ENCODE measurements at regions of chr21 and their contacts with region 1.

Region 1: DNA sequence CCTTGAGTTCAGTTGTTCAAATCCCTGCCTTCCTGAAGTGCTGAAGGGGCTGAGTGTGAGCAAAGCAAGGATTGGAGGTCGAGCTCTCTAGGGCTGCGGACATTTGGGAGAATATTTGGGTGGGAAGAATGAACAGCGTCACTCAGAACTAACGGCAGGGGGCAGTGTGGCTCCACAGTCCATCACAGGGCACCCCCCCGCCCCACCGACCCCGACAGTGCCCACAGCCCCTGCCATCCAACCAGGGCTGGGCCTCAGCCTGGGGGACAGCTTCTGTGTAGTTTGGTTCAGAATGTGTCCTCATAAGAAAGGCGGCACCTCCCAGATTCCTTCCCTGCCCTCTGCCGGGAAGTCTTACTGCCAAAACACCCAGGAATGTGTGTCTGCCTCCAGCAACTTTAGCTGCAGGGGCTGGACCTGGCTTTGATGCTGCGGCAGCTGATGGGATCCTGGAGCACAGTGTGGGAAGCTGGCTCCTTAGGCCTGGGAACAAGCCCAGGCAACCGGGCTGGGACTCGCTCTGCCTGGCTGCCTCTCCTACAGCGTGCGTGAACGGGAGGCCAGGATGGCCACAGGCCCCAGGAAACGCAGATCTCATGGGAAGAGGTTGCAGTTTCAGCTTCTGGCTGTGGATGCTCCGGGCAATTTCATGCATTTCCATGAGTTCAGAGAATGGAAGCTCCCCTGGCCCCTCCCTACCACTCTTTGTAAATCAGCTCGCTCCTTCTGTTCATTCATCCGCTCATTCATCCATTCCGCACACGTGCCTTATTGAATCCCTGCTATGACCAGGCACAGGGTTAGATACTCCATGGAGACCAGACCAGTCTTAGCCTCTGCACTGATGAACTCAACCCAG is 104.9 kb upstream of the TMPRSS2 start:
- H3K4me3 ChIP-seq: no peak overlapping the region
- H3K27ac ChIP-seq: no peak overlapping the region
- H3K4me1 ChIP-seq: no peaks in the 10 kb centered on the region
- CTCF ChIP-seq: peak; percentile 72

Region 2: DNA sequence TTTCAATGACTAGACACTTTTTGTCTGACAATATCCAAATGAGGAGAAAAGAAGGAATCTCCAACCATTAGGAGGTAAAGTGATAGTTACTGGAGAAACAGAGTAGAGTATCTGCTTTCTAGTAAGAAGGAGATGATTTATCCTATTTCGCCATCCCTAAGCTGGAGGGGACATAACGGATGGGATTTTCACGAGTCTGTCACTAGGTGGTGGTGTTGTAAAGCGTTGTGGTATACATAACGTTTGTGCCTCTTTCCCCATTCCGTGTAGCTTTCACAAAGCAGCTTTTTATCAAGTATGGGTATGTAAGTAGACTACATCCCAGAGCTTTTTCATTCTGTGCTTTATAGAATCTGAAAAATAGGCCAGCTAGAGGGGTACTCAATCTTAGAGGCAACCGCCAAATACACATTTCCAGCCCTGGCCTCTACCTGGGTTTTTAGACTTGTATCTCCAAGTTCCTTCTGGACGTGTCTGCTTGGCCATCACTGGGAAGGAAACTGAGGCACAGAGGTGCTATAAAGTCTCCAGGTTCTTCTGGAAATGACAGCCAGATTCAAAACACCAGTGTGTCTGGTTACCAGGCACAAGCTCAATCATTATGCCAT is 329.6 kb before region 1 on chr21:
- CTCF ChIA-PET with region 1: interaction called, 92 read pairs
- POLR2A ChIA-PET with region 1: no interaction called
- H3K4me3 ChIP-seq: no peak overlapping the region
- H3K27ac ChIP-seq: no peak overlapping the region
- H3K4me1 ChIP-seq: no peaks in the 10 kb centered on the region
- CTCF ChIP-seq: peak; percentile 58

Region 3: DNA sequence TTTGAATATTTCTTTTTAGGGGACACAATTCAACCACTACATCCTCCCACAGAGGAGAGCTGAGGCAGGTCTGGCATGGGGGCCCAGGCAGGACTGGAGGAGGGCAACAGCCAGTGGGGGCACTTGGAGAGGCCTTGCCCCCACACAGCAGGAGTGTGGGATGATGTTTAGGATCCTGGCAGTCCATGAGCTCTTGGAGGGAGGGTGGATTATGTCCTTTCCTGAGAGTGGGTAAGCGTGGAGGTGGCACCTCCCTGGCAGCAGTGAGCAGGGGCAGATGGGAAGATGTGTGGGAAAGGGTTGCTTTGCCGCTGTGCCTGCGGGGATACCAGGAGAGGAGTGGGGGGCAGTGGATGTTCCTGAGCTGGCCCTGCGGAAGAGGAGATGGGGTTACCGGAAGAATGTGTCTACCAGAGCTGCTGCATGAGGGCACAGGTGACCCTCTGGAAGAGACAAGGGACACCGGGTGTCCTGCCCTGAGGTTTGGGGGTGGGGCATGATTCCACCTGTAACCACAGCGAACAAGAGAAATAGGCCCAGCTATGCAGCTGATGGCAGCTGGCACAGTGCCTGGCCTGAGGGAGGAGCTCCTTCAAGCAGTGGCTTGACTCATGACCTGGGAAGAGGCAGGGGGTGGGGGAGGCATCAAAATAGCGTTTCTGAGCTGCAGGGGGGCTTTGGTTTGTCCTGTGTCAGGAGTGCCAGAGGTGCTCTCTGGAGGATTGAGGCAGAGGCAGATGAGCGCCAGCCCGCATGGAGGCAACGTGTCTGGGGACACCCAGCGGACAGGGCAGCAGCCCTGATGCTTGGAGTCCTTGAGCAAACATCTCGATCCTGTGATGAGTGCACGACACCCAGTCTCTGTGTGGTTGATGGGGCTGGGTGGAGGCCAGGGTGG is 18.9 kb after region 1 on chr21:
- CTCF ChIA-PET with region 1: interaction called, 23 read pairs
- POLR2A ChIA-PET with region 1: no interaction called
- H3K4me3 ChIP-seq: no peak overlapping the region
- H3K27ac ChIP-seq: no peak overlapping the region
- H3K4me1 ChIP-seq: peaks cover 7% of the 10 kb centered on the region
- CTCF ChIP-seq: no peak

Region 4: GRCh38 chr21:41691205-41692194 is 78.6 kb after region 1 on chr21:
- CTCF ChIA-PET with region 1: no interaction called
- POLR2A ChIA-PET with region 1: no interaction called
- H3K4me3 ChIP-seq: no peak overlapping the region
- H3K27ac ChIP-seq: no peak overlapping the region
- H3K4me1 ChIP-seq: no peaks in the 10 kb centered on the region
- CTCF ChIP-seq: no peak

Region 5: DNA sequence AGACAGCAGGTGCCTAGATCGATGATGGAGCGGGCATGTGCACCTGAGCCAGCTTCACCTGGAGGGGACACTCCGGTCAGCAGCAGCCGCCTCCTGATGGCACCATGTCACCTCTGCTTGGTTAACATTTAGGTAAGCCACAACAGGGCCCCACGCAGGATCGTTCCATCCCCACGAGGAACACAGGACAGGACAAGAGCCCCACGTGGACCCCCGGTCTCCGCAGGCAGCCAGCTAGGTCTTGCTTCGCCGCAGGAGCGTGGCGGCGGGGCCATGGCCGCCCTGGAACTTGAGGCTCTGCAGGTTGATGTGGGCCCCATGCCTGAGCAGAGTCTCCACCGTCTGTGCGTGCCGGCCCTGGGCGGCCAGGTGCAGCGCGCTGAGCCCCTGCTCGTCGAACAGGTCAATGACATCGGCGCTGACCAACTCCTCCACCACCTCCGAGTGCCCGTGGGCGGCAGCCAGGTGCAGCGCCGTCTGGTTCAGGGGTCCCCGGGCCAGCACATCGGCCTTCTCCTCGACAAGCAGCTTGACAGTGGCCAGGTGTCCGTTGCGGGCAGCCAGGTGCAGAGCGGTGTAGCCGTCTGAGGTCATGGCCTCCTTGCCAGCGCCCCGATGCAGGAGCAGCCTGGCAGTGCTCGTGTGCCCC is 127.8 kb after region 1 on chr21:
- CTCF ChIA-PET with region 1: interaction called, 11 read pairs
- POLR2A ChIA-PET with region 1: no interaction called
- H3K4me3 ChIP-seq: no peak overlapping the region
- H3K27ac ChIP-seq: no peak overlapping the region
- H3K4me1 ChIP-seq: no peaks in the 10 kb centered on the region
- CTCF ChIP-seq: no peak

Region 6: GRCh38 chr21:41768437-41769061 is 155.6 kb after region 1 on chr21:
- CTCF ChIA-PET with region 1: interaction called, 164 read pairs
- POLR2A ChIA-PET with region 1: interaction called, 4 read pairs
- H3K4me3 ChIP-seq: peak overlapping the region; percentile 14
- H3K27ac ChIP-seq: no peak overlapping the region; the same call in 1 of the 2 replicates
- H3K4me1 ChIP-seq: peaks cover 26% of the 10 kb centered on the region
- CTCF ChIP-seq: no peak

Region 7: DNA sequence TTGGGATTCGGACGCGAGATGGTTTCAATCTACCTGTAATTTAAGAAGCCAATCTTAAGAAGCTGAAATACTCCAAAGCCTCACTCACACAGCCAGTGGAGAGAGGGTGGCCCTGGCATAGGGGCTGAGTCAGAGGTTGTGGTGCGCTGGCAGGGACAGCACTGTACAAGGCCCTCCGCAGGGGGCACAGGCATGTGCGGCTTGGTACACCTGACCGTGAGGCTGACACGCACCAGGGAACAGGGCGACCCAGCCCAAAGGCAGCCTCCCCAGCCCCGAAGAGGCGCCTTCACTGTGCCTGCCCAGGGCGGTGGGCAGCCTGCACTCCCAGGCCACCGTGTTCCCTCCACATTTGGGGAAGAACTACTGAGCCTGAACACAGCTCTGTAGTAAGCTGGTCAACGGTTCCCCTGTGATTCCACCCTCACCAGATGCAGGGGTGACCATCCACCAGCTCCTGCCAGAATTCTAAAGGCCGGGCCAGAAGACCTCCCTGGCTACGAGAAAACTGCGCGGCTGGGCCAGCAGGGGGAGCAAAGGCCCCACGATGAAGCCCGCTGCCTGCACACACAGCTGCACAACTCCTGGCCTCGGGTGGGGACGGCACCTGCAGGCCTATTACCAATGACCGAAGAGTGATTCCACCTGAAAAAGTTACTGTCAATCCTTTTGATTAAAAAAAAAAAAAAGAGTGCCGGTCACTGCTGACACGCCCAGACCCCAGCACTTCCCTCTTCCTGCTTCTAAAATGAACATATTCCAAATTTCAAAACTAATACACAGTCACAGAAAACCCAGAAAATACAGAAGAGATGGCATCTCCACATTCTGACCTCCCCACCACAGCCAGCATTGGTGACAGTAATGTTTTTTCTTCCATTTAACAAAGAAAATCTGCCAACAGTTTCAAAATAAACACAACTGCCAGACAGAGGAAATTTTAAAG is 203.6 kb after region 1 on chr21:
- CTCF ChIA-PET with region 1: interaction called, 203 read pairs
- POLR2A ChIA-PET with region 1: no interaction called
- H3K4me3 ChIP-seq: no peak overlapping the region
- H3K27ac ChIP-seq: no peak overlapping the region
- H3K4me1 ChIP-seq: no peaks in the 10 kb centered on the region
- CTCF ChIP-seq: peak; percentile 63; the same call in 1 of the 2 replicates

Region 8: GRCh38 chr21:42107881-42108553 is 495.1 kb after region 1 on chr21:
- CTCF ChIA-PET with region 1: interaction called, 33 read pairs
- POLR2A ChIA-PET with region 1: no interaction called
- H3K4me3 ChIP-seq: no peak overlapping the region
- H3K27ac ChIP-seq: no peak overlapping the region
- H3K4me1 ChIP-seq: no peaks in the 10 kb centered on the region
- CTCF ChIP-seq: peak; percentile 87

Measured in HEK293 (cell line).